Endothelial cell of umbilical vein (primary cell): ENCODE measurements at regions of chr7 and their contacts with region 1.

Region 1: GRCh38 chr7:148987010-148987750 is 41.1 kb downstream of the PDIA4 start:
- DNase-seq: peak; percentile 94
- H3K4me3 ChIP-seq: peak overlapping the region; percentile 21 to 63 (median 56)
- H3K27ac ChIP-seq: peak overlapping the region; percentile 32
- H3K4me1 ChIP-seq: peaks cover 11% of the 10 kb centered on the region
- H3K27me3 ChIP-seq: peaks cover 0 to 10% of the 10 kb centered on the region in 2 experiments
- CTCF ChIP-seq: no peak
- POLR2A ChIP-seq: peak; percentile 63

Region 2: GRCh38 chr7:149005241-149006050 is 18.3 kb after region 1 on chr7:
- CTCF ChIA-PET with region 1: interaction called, 18 read pairs
- POLR2A ChIA-PET with region 1: no interaction called
- dilution Hi-C with region 1: no loop called
- intact Hi-C with region 1: no loop called
- DNase-seq: peak; percentile 65
- H3K4me3 ChIP-seq: no peak overlapping the region
- H3K27ac ChIP-seq: no peak overlapping the region
- H3K4me1 ChIP-seq: no peaks in the 10 kb centered on the region
- H3K27me3 ChIP-seq: no peaks in the 10 kb centered on the region
- CTCF ChIP-seq: peak; percentile 66 to 91
- POLR2A ChIP-seq: no peak